Ascending aorta (tissue), 2 donors: ENCODE measurements at regions of chr2 and their contacts with region 1.

Region 1: DNA sequence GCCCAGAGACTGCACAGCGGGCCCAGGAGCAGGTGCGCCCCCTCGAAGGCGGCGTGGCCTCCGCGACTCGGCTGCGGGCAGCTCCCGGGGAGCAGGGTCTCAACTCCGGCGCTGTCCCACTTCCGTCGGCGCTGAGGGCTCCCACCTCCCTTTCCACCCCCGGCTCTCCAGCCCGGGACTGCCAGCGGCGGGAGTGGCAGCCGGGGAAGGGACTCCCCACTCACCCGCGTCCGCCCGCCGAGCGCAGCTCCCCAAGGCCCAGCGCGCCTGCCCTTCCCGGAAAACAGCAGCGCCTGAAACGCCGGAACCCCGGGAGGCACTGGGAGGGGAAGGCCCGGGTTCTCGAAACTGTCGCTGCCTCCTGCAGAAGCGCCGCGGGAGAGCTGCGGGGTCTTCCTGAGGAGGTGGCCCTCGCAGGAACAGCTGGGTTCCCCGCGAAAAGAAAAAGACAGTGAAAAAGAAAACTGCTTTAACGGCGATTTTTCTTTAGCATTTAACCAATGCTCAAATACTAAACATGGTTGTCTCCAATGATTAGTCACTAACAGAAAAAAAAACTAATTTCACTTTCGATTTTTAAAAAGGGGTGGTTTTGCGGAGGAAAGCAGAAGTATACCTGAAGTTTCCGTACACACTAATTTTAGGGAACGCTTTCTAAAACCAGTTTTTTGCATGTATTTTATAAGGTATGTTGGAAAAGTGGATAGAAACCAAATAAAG is at the start of gene NMI:
- DNase-seq: peak; percentile 19 to 84
- H3K4me3 ChIP-seq: peak within 1 kb of the TSS; percentile 73 to 74
- H3K27ac ChIP-seq: peak within 1 kb of the TSS; percentile 89 to 93
- H3K4me1 ChIP-seq: no peaks in the 10 kb centered on the region
- H3K27me3 ChIP-seq: no peaks in the 10 kb centered on the region
- CTCF ChIP-seq: no peak
- total RNA-seq, gene NMI: 9.9 TPM

Region 2: DNA sequence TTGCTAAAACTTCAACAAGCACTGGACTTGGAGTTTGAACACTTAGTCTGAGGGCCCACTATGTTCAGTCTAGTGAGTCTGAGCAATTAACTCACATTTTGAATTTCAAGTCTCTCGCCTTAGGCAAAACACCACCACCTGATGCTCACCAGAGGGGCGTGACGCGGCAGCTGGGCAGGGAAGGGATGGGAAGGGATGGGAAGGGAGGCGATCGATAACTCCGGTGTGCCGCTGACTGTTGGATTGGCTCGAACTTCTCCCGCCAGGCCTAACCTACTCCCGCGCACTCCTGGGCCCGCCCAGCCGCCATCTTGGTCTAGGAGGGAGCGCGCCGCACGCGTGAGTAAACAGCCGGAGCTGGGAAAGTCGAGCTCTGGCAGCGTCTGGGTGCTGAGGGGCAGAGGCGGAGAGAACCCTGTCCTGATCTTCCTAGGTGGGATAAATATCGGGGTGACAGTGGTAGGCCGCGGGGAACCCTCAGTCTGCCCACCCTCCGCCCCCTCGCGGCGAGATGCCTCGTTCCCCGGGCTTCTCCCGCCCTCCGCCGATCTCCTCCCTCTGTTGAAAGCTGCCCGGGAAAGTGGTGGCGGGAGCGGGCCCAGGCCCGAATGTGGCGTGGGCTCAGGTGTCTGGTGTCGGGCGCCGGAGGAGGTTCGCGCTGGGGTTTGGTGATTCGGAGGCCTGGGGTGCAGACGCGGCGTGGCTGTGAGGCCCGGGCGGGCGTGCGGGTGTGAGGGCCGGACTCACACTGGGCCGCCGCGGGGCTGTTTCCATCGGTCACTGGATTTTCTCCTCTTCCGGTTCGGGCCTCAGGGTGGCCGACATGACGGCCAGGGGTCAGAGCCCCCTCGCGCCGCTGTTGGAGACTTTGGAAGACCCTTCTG is 120.3 kb after region 1 on chr2 and contains the start of gene RIF1:
- intact Hi-C with region 1: loop called (anchors 2 kb)
- DNase-seq: peak; percentile 47 to 93
- H3K4me3 ChIP-seq: peak within 1 kb of the TSS; percentile 78 to 81
- H3K27ac ChIP-seq: peak within 1 kb of the TSS; percentile 85 to 91
- H3K4me1 ChIP-seq: peaks cover 0 to 10% of the 10 kb centered on the region in 2 donors
- H3K27me3 ChIP-seq: no peaks in the 10 kb centered on the region
- CTCF ChIP-seq: peak; percentile 54 to 81 (median 55)
- total RNA-seq, gene RIF1: 10.7 TPM